Breast epithelium (tissue), 4 donors: ENCODE measurements at regions of chr12 and their contacts with region 1.

Region 1: GRCh38 chr12:22577667-22578066 is 33.3 kb upstream of the C2CD5 start:
- DNase-seq: no peak
- H3K4me3 ChIP-seq: no peak overlapping the region
- H3K27ac ChIP-seq: no peak overlapping the region
- H3K4me1 ChIP-seq: no peaks in the 10 kb centered on the region
- H3K27me3 ChIP-seq: no peaks in the 10 kb centered on the region
- CTCF ChIP-seq: no peak
- POLR2A ChIP-seq: no peak

Region 2: GRCh38 chr12:21962236-21962635 is 615.4 kb before region 1 on chr12:
- intact Hi-C with region 1: loop called (anchors 5 kb)
- DNase-seq: no peak
- H3K4me3 ChIP-seq: no peak overlapping the region
- H3K27ac ChIP-seq: no peak overlapping the region
- H3K4me1 ChIP-seq: no peaks in the 10 kb centered on the region
- H3K27me3 ChIP-seq: no peaks in the 10 kb centered on the region
- CTCF ChIP-seq: no peak
- POLR2A ChIP-seq: no peak

Region 3: GRCh38 chr12:22562036-22563028 is 15.3 kb before region 1 on chr12:
- intact Hi-C with region 1: no loop called
- DNase-seq: no peak
- H3K4me3 ChIP-seq: no peak overlapping the region
- H3K27ac ChIP-seq: no peak overlapping the region
- H3K4me1 ChIP-seq: no peaks in the 10 kb centered on the region
- H3K27me3 ChIP-seq: no peaks in the 10 kb centered on the region
- CTCF ChIP-seq: no peak
- POLR2A ChIP-seq: no peak